H1 (cell line): ENCODE measurements at regions of chr2 and their contacts with region 1.

Region 1: DNA sequence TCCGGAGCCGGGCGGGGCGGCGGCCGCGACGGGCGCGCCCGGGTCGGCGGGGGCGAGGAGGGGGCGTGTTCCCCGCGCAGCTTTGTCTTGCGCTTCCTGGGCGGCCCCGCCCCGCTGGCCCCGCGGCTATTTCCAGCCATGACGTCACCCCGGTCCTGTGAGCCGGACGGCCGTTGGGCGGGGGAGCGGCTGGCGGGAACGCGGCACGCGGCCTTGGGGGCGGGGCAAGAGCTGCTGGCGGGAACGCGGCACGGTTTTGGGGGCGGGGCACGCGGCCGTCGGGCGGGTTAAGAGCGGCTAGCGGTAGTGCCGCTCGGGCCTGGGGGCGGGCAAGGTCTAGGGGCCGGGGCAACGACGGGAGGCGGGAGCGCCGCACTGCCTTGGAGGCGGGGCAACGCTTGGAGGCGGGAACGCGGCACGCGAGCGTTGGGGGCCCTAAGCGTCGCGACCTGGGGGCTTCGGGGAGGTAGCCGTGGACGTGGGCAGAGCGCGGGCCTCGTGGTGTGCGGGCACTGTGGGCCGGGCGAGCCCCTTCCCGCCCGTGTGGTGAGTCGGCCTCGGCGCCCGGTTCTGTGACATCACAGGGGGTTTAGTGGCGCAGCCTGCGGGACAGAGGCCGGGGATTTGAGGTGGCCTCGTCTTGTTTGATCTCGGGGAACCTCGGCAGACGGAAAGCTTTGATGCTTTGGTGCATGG is 704 bp downstream of the KLF11 start:
- DNase-seq: peak in 1 of 2 experiments; percentile 89
- H3K4me3 ChIP-seq: peak overlapping the region in 2 of 4 experiments; percentile 61; a peak in 4 of 8 replicates
- H3K27ac ChIP-seq: peak overlapping the region; percentile 58; the same call in 1 of the 2 replicates
- H3K4me1 ChIP-seq: peaks cover 0 to 5% (median 2%) of the 10 kb centered on the region in 4 experiments; a peak in 3 of 7 replicates
- H3K27me3 ChIP-seq: peaks cover 0 to 26% (median 18%) of the 10 kb centered on the region in 4 experiments; a peak in 6 of 7 replicates
- CTCF ChIP-seq: no peak
- EP300 ChIP-seq: no peak
- POLR2A ChIP-seq: no peak
- RAD21 ChIP-seq: no peak

Region 2: GRCh38 chr2:9799665-9800632 is 244.1 kb before region 1 on chr2:
- CTCF ChIA-PET with region 1: interaction called, 11 read pairs
- POLR2A ChIA-PET with region 1: no interaction called
- DNase-seq: peak; percentile 83 to 99
- H3K4me3 ChIP-seq: no peak overlapping the region
- H3K27ac ChIP-seq: no peak overlapping the region
- H3K4me1 ChIP-seq: peaks cover 0 to 8% (median 2%) of the 10 kb centered on the region in 4 experiments; a peak in 4 of 7 replicates
- H3K27me3 ChIP-seq: no peaks in the 10 kb centered on the region
- CTCF ChIP-seq: peak; percentile 99 to 100 (median 99)
- EP300 ChIP-seq: no peak
- POLR2A ChIP-seq: no peak
- RAD21 ChIP-seq: peak; percentile 91 to 94

Region 3: GRCh38 chr2:10019174-10019573 is 24.9 kb before region 1 on chr2:
- CTCF ChIA-PET with region 1: interaction called, 14 read pairs
- POLR2A ChIA-PET with region 1: interaction called, 7 read pairs
- DNase-seq: no peak
- H3K4me3 ChIP-seq: no peak overlapping the region
- H3K27ac ChIP-seq: no peak overlapping the region
- H3K4me1 ChIP-seq: no peaks in the 10 kb centered on the region
- H3K27me3 ChIP-seq: no peaks in the 10 kb centered on the region
- CTCF ChIP-seq: no peak
- EP300 ChIP-seq: no peak
- POLR2A ChIP-seq: no peak
- RAD21 ChIP-seq: no peak

Region 4: DNA sequence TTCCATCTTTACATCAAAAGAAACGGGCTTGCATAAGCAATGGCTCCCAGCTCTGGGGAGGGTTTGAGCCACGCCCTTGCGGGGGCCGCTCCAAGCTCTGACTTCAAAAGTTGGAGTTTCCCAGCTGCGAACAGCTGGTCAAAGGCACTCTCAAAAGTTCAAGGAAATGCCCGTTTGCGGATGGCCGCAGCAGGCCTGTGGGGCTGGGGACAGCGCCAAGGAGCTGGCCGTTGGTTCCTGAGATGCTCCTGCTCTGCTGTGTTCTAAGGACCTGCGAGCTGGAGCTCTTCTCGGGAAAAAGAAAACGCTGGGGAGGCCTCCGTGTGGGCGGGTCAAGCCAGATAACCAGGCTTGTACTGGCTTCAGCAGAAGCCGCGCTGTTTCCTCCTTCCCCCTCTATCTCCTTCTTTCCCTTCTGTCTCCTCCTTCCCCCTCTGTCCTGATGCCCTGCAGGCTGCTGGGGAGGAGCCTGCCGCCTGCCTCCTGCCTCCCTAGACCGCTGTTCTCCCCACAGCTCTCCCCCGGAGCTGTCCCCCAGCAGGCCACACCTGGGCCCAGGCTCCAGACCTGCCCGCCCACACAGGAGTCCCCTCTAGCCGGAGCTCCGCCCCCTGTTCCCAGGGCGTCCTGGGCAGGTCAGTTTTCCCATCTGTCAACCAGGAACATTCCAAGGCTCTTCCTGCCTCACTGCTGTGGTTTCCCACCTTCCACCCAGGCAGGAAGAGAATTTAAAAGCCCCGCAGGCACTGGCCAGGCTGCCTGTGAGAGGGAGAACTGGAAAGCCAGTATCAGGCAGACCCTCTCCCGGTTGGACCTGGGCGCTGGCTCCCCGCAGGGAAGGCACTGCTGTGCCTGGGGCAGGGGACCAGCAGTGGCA is 13.4 kb after region 1 on chr2:
- CTCF ChIA-PET with region 1: interaction called, 35 read pairs
- POLR2A ChIA-PET with region 1: interaction called, 32 read pairs
- DNase-seq: peak; percentile 80 to 85
- H3K4me3 ChIP-seq: peak overlapping the region; percentile 28 to 56 (median 40); a peak in 7 of 8 replicates
- H3K27ac ChIP-seq: no peak overlapping the region
- H3K4me1 ChIP-seq: peaks cover 0 to 16% (median 2%) of the 10 kb centered on the region in 4 experiments; a peak in 3 of 7 replicates
- H3K27me3 ChIP-seq: no peaks in the 10 kb centered on the region
- CTCF ChIP-seq: no peak
- EP300 ChIP-seq: no peak
- POLR2A ChIP-seq: peak in 1 of 2 experiments; percentile 42; a peak in 1 of 3 replicates
- RAD21 ChIP-seq: no peak; a peak in 1 of 4 replicates

Region 5: GRCh38 chr2:10097352-10098148 is 53.5 kb after region 1 on chr2:
- CTCF ChIA-PET with region 1: interaction called, 13 read pairs
- POLR2A ChIA-PET with region 1: interaction called, 3 read pairs
- DNase-seq: peak in 1 of 2 experiments; percentile 84
- H3K4me3 ChIP-seq: no peak overlapping the region
- H3K27ac ChIP-seq: no peak overlapping the region
- H3K4me1 ChIP-seq: peaks cover 0 to 4% (median 1%) of the 10 kb centered on the region in 4 experiments; a peak in 2 of 7 replicates
- H3K27me3 ChIP-seq: no peaks in the 10 kb centered on the region
- CTCF ChIP-seq: peak; percentile 82 to 96 (median 92)
- EP300 ChIP-seq: no peak; a peak in 1 of 3 replicates
- POLR2A ChIP-seq: no peak
- RAD21 ChIP-seq: peak; percentile 83 to 87